Activated T-helper 1 cell treated with anti-CD3 and anti-CD28 coated beads, Interleukin-12 subunit alpha, Interleukin-12 subunit beta, Interleukin-2, Interleukin-4 antibody, amounts not matched to agents 30 ng/mL and 10 ng/mL and 1 ng/mL, durations not matched to agents 14 hours and 24 hours and 36 hours (primary cell): ENCODE measurements at regions of chr6 and their contacts with region 1.

Region 1: GRCh38 chr6:32971581-32972352 is 3.4 kb downstream of the BRD2 start:
- DNase-seq: peak; percentile 99
- H3K4me3 Mint-ChIP-seq: peak overlapping the region; percentile 96
- H3K27ac Mint-ChIP-seq: peak overlapping the region; percentile 98
- H3K4me1 Mint-ChIP-seq: peaks cover 32% of the 10 kb centered on the region
- H3K27me3 Mint-ChIP-seq: peaks cover 4% of the 10 kb centered on the region

Region 2: GRCh38 chr6:31901953-31902643 is 1069.7 kb before region 1 on chr6 and contains the start of gene ZBTB12:
- intact Hi-C with region 1: loop called (anchors 10 kb)
- DNase-seq: peak; percentile 82
- H3K4me3 Mint-ChIP-seq: peak within 1 kb of the TSS; percentile 81
- H3K27ac Mint-ChIP-seq: peak within 1 kb of the TSS; percentile 88
- H3K4me1 Mint-ChIP-seq: peaks cover 37% of the 10 kb centered on the region
- H3K27me3 Mint-ChIP-seq: no peaks in the 10 kb centered on the region
- total RNA-seq, gene ZBTB12: 4.6 and 5.1 TPM in 2 replicates

Region 3: GRCh38 chr6:32195652-32195901 is 776.2 kb before region 1 on chr6:
- intact Hi-C with region 1: loop called (anchors 2 kb)
- DNase-seq: peak; percentile 100
- H3K4me3 Mint-ChIP-seq: peak overlapping the region; percentile 97
- H3K27ac Mint-ChIP-seq: peak overlapping the region; percentile 98
- H3K4me1 Mint-ChIP-seq: peaks cover 48% of the 10 kb centered on the region
- H3K27me3 Mint-ChIP-seq: peaks cover 2% of the 10 kb centered on the region

Region 4: DNA sequence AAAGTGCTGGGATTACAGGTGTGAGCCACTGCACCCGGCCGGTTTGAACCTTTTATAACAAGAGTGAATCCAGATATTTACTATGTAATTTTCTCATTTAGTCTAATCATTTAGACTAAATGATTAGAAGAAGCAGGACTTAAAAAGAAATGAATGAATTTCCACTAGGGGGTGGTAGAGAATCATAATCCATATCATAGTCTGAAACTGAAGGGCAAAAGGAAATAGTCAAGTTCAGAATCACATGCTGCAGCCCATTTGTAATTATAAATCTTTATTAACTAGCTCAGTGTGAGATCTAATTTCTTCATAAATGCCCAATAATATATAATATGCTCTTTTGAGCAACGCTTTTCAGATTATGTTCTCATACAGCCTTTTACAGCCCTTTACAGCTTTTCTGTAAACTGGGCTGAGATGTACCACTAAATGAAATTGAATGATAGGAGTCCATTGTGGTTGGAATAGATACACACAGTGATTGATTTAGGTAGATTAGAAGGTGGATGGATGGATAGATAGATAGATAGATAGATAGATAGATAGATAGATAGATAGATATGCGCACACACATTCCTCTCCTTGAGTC is 86.0 kb before region 1 on chr6:
- intact Hi-C with region 1: loop called (anchors 1 kb)
- DNase-seq: no peak
- H3K4me3 Mint-ChIP-seq: no peak overlapping the region
- H3K27ac Mint-ChIP-seq: no peak overlapping the region
- H3K4me1 Mint-ChIP-seq: no peaks in the 10 kb centered on the region
- H3K27me3 Mint-ChIP-seq: peaks cover 13% of the 10 kb centered on the region

Region 5: DNA sequence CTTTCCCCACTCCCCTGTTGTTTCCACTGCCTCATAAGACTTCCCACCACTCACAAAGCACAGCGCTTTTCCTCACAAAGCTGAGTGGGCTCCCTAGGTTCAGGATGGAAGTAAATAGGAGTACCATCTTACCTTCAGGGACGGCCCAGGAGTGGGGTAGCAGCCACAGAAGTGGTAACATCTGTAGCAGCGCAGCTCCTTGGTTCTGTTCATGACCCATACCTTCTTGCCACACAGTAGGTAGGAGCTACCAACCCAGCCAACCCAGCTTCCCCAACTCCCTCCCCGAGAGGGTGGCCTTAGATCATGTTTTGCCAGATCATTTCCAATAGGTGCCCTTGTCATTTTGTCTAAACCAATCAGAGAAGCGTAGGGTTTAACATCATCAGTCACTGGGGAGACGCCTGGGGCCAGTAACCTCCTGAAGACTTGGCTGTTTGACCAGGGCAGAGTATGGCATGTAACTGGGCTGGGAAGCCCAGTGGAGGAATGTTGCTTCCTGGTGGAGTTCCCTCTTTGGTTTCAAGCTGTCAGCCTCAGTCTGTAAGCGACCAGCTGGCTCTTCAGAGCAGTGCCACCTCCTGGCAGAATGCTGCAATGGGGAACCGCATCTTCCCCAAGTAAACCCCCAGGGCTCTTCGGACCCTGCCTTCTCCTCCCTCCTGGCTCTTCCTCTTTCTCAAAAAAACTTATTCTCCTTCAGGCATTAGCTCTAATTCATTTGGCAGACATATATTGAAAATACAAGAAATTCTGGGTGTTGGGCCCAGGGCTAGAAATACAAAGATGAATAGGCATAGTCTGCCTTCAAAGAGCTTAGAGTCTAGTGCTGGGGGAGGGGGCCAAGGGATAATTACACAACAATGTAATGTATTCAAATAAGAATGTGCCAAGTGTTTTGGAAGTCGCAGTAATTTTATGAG is 18.7 kb before region 1 on chr6 and contains the start of gene HLA-DMA:
- intact Hi-C with region 1: loop called (anchors 1 kb)
- DNase-seq: peak; percentile 79
- H3K4me3 Mint-ChIP-seq: peak within 1 kb of the TSS; percentile 81
- H3K27ac Mint-ChIP-seq: peak within 1 kb of the TSS; percentile 72
- H3K4me1 Mint-ChIP-seq: peaks cover 57% of the 10 kb centered on the region
- H3K27me3 Mint-ChIP-seq: no peaks in the 10 kb centered on the region
- total RNA-seq, gene HLA-DMA: 14.1 and 14.2 TPM in 2 replicates

Region 6: DNA sequence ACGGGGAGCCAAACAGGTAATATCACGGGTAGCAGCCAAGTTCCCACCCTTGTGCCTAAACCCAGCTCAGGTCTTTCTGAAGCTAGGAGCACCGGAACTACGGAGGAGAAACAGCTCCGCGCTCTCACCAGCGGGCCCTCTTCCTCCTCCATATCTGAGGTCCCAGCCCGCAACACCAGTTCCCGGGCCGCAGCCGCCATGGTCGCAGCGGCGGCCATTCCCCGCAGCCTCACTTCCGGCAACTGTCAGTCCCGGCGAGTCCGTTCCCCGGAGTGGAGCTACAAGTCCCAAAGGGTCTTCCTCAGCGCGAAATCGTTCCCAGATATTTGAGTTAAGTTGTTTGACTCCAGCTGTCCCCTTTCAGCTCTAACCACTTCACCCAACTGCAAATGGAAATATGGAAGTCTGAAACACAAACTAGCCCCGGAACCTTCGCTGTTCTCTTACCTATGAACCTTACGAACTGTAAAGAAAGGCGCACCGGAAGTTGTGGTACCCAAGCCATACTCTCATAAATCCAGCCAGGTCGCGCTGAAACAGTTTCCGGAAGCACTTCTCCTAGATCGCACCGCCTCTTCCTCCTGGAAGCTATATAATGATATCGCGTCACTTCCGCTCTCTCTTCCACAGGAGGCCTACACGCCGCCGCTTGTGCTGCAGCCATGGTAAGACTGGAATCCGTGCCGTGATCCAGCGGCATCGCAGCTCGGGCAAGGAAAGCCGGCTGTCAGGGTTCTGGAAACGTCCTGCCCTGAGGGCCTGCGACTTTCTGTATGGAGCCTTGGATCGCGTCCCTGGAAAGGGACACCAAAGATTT is 299.9 kb after region 1 on chr6 and contains the starts of genes RPS18 and VPS52:
- intact Hi-C with region 1: loop called (anchors 1 kb)
- DNase-seq: peak; percentile 89
- H3K4me3 Mint-ChIP-seq: peak within 1 kb of the TSS; percentile 97
- H3K27ac Mint-ChIP-seq: peak within 1 kb of the TSS; percentile 99
- H3K4me1 Mint-ChIP-seq: peaks cover 55% of the 10 kb centered on the region
- H3K27me3 Mint-ChIP-seq: no peaks in the 10 kb centered on the region
- total RNA-seq, gene RPS18: 2,930 and 2,946 TPM in 2 replicates
- total RNA-seq, gene VPS52: 59.8 and 63.5 TPM in 2 replicates